Transverse colon (tissue), 4 donors: ENCODE measurements at regions of chr7 and their contacts with region 1.

Region 1: DNA sequence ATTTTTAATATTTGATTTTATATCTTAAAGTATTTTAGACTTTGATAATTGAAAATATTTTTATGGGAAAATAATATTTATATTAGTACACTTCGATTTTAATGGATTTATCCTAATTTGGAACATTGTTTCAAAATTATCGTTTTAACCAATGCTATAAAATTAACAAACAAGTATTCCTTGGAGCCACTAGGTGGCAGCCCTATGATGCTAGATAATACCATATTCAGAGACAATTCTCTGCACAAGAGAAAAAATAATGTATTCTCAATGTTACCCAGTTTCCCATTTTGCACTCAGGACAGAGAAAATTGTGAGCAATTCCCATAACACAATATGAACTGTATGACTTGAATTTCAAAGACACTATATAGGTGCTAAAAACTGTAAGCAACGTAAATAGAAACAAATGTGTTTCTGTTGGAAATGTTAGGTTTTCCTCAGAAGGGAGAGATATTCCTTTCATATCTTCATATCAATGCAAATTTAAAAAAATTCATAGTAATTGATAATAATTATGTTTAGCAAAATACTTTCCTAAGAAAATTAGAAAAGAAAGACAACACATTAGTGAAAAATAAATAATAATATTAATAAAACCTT is 237.8 kb downstream of the SEMA3E start:
- DNase-seq: no peak
- H3K4me3 ChIP-seq: no peak overlapping the region
- H3K27ac ChIP-seq: no peak overlapping the region
- H3K4me1 ChIP-seq: no peaks in the 10 kb centered on the region
- H3K27me3 ChIP-seq: no peaks in the 10 kb centered on the region
- CTCF ChIP-seq: peak; percentile 37 to 64 (median 57)
- EP300 ChIP-seq: no peak
- POLR2A ChIP-seq: no peak

Region 2: GRCh38 chr7:83655951-83656556 is 245.0 kb after region 1 on chr7:
- in situ Hi-C with region 1: loop called in 2 of 4 experiments (anchors 10 to 25 kb)
- intact Hi-C with region 1: no loop called
- DNase-seq: peak; percentile 16
- H3K4me3 ChIP-seq: no peak overlapping the region
- H3K27ac ChIP-seq: no peak overlapping the region
- H3K4me1 ChIP-seq: no peaks in the 10 kb centered on the region
- H3K27me3 ChIP-seq: no peaks in the 10 kb centered on the region
- CTCF ChIP-seq: peak; percentile 57 to 77 (median 69)
- EP300 ChIP-seq: no peak
- POLR2A ChIP-seq: no peak

Region 3: GRCh38 chr7:83663131-83663530 is 252.0 kb after region 1 on chr7:
- in situ Hi-C with region 1: loop called in 2 of 4 experiments (anchors 10 to 25 kb)
- intact Hi-C with region 1: no loop called
- DNase-seq: no peak
- H3K4me3 ChIP-seq: no peak overlapping the region
- H3K27ac ChIP-seq: no peak overlapping the region
- H3K4me1 ChIP-seq: no peaks in the 10 kb centered on the region
- H3K27me3 ChIP-seq: no peaks in the 10 kb centered on the region
- CTCF ChIP-seq: no peak
- EP300 ChIP-seq: no peak
- POLR2A ChIP-seq: no peak